ENCODE measurements at regions of chr13 and their contacts with region 1.

Region 1: DNA sequence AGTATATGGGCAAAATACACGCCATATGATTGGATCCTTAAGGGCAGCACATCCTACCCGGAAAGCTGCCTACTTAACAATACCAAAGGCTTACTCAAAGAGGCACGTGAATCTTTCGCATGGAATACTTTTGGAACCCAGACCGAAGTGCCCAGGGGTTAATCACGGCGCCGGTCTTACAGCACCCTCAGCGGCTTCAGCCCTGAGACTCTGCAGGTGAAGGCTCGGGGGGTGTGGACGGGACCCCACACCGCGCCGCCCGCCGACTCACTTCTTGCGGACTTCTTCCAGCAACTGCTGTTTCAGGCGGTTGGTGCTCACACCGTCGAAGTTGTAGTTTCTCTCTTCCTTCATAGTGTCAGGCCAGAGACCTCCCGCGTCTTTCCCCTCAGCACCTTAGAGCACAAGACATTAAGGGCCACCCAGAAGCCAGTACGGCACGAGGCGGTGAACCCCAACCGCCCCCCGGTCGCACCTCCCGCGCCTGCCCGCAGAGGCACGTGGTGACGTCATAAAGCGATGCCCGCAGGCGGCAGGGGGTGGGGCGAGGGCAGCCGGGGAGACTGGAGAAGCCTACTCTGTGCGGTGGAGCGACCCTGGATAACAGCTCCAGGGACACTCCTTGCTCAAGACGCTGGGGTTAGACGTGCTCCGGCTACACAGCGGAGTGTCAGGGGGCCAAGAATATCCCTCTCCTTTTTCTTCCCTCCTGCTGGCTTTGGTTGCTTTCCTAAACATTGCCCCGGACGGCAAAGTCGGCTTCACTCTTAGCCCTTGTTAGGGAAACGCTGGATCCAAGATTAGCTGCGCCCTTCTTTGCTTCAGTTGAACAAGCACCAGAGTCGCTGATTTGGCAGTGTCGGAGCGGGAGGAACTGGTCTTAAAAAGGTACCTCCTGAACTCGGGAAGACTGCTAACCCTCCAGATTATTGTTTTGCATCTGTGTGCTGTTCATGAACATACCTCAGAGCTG is at the start of gene CCDC169:
- DNase-seq: peak; percentile 51
- ATAC-seq: peak; percentile 93
- H3K4me3 ChIP-seq: peak within 1 kb of the TSS; percentile 67
- H3K27ac ChIP-seq: peak within 1 kb of the TSS; percentile 56
- H3K4me1 ChIP-seq: peaks cover 2% of the 10 kb centered on the region; the same call in 1 of the 2 replicates
- H3K27me3 ChIP-seq: no peaks in the 10 kb centered on the region
- CTCF ChIP-seq: no peak
- POLR2A ChIP-seq: no peak
- RAD21 ChIP-seq: no peak
- total RNA-seq, gene CCDC169: 0.54 and 0.83 TPM in 2 replicates

Region 2: GRCh38 chr13:35961461-35962220 is 336.0 kb before region 1 on chr13:
- CTCF ChIA-PET with region 1: no interaction called
- POLR2A ChIA-PET with region 1: no interaction called
- dilution Hi-C with region 1: no loop called
- in situ Hi-C with region 1: no loop called
- intact Hi-C with region 1: no loop called
- DNase-seq: peak; percentile 13
- ATAC-seq: peak; percentile 37; the same call in 1 of the 2 replicates
- H3K4me3 ChIP-seq: no peak overlapping the region
- H3K27ac ChIP-seq: no peak overlapping the region
- H3K4me1 ChIP-seq: peaks cover 2% of the 10 kb centered on the region; the same call in 1 of the 2 replicates
- H3K27me3 ChIP-seq: no peaks in the 10 kb centered on the region
- CTCF ChIP-seq: no peak; the same call in 1 of the 2 replicates
- POLR2A ChIP-seq: no peak
- RAD21 ChIP-seq: peak; percentile 36; the same call in 1 of the 2 replicates

Region 3: GRCh38 chr13:36337938-36338641 is 40.4 kb after region 1 on chr13:
- CTCF ChIA-PET with region 1: interaction called, 3 read pairs
- POLR2A ChIA-PET with region 1: interaction called, 9 read pairs
- dilution Hi-C with region 1: no loop called
- in situ Hi-C with region 1: no loop called
- intact Hi-C with region 1: loop called (anchors 5 kb)
- DNase-seq: no peak
- ATAC-seq: no peak
- H3K4me3 ChIP-seq: no peak overlapping the region
- H3K27ac ChIP-seq: no peak overlapping the region
- H3K4me1 ChIP-seq: peaks cover 5% of the 10 kb centered on the region; the same call in 1 of the 2 replicates
- H3K27me3 ChIP-seq: no peaks in the 10 kb centered on the region
- CTCF ChIP-seq: no peak
- POLR2A ChIP-seq: no peak
- RAD21 ChIP-seq: no peak

Region 4: GRCh38 chr13:36395280-36395679 is 97.6 kb after region 1 on chr13:
- CTCF ChIA-PET with region 1: no interaction called
- POLR2A ChIA-PET with region 1: no interaction called
- dilution Hi-C with region 1: no loop called
- in situ Hi-C with region 1: no loop called
- intact Hi-C with region 1: loop called (anchors 1 kb)
- DNase-seq: peak; percentile 66
- ATAC-seq: peak; percentile 93
- H3K4me3 ChIP-seq: no peak overlapping the region
- H3K27ac ChIP-seq: no peak overlapping the region
- H3K4me1 ChIP-seq: no peaks in the 10 kb centered on the region
- H3K27me3 ChIP-seq: peaks cover 2% of the 10 kb centered on the region; the same call in 1 of the 2 replicates
- CTCF ChIP-seq: peak; percentile 71
- POLR2A ChIP-seq: no peak
- RAD21 ChIP-seq: peak; percentile 60